A549 (cell line): ENCODE measurements at regions of chr20 and their contacts with region 1.

Region 1: GRCh38 chr20:51767010-51767558 is 1.1 kb downstream of the ATP9A start:
- DNase-seq: peak; percentile 69 to 87
- ATAC-seq: peak; percentile 93 to 97
- H3K4me3 ChIP-seq: peak overlapping the region; percentile 89
- H3K27ac ChIP-seq: peak overlapping the region; percentile 83 to 97
- H3K4me1 ChIP-seq: peaks cover 9% of the 10 kb centered on the region; the same call in 2 of the 3 replicates
- CTCF ChIP-seq: no peak
- EP300 ChIP-seq: no peak
- POLR2A ChIP-seq: no peak
- RAD21 ChIP-seq: peak in 1 of 2 experiments; percentile 14; a peak in 1 of 5 replicates

Region 2: DNA sequence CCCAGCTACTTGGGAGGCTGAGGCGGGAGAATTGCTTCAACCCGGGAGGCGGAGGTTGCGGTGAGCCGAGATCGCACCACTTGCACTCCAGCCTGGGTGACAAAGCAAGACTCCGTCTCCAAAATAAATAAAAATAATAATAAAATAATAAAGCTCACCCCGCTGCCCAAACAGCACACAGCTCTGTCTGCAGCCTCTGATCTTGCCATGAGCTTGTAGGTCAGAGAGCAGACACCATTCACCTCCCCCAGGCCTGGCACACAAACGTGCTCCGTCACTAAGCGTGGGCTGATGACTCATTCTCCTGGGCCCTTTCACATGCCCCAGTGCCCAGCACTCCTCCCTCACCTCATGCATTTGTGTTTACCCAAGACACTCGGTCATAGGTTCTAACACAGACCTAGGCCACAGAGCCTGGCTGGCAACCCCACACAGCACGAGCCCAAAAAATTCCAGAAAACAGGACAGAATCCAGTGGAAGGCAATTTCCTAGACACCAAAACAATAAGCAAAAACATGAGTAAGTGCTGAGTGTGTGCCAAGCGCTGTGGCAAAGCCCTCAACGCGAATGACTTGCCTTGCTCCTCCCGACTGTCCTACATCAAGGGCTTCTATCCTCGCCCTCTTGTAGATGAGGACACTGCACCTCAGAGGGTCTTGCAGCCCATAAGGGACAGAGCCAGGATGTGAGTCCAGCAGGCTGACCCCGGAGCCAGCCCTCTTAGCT is 16.9 kb before region 1 on chr20:
- CTCF ChIA-PET with region 1: interaction called, 6 read pairs
- POLR2A ChIA-PET with region 1: interaction called, 11 read pairs
- DNase-seq: peak; percentile 93 to 99
- ATAC-seq: peak; percentile 93 to 95
- H3K4me3 ChIP-seq: peak overlapping the region; percentile 14
- H3K27ac ChIP-seq: peak overlapping the region; percentile 89
- H3K4me1 ChIP-seq: peaks cover 60% of the 10 kb centered on the region
- CTCF ChIP-seq: no peak
- EP300 ChIP-seq: peak; percentile 70 to 79; a peak in 3 of 5 replicates
- POLR2A ChIP-seq: no peak
- RAD21 ChIP-seq: peak; percentile 4 to 47; a peak in 2 of 5 replicates

Region 3: DNA sequence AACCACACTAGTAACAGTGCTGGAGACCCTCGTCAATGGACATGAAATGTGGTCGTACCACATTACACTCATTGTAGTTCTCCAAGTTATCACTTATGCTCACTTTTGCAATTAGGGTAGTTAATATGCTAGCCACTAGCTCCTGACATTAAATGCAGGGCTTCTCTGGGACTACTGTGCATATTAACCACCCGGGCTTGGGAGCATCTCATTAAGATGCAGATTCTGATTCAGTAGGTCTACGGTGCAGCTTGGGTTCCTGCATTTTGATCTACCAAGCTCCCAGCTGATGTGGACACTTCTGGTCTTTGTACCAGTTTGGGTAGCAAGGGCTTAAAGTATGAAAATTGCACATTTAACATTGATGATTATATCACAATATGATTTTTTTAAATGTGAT is 326.5 kb after region 1 on chr20:
- CTCF ChIA-PET with region 1: no interaction called
- POLR2A ChIA-PET with region 1: no interaction called
- DNase-seq: no peak
- ATAC-seq: no peak
- H3K4me3 ChIP-seq: no peak overlapping the region
- H3K27ac ChIP-seq: no peak overlapping the region
- H3K4me1 ChIP-seq: no peaks in the 10 kb centered on the region
- CTCF ChIP-seq: no peak
- EP300 ChIP-seq: no peak
- POLR2A ChIP-seq: no peak
- RAD21 ChIP-seq: no peak